CD8-positive, alpha-beta T cell (primary cell): ENCODE measurements at regions of chr7 and their contacts with region 1.

Region 1: GRCh38 chr7:73451780-73452398 is 18.3 kb downstream of the FZD9 start:
- DNase-seq: peak in 4 of 9 experiments; percentile 21 to 77 (median 44)
- ATAC-seq: peak; percentile 98
- H3K4me3 ChIP-seq: no peak overlapping the region
- H3K4me3 Mint-ChIP-seq: no peak overlapping the region
- H3K27ac ChIP-seq: no peak overlapping the region
- H3K27ac Mint-ChIP-seq: no peak overlapping the region
- H3K4me1 ChIP-seq: no peaks in the 10 kb centered on the region
- H3K4me1 Mint-ChIP-seq: peaks cover 22% of the 10 kb centered on the region
- H3K27me3 ChIP-seq: no peaks in the 10 kb centered on the region
- H3K27me3 Mint-ChIP-seq: no peaks in the 10 kb centered on the region
- CTCF ChIP-seq: peak; percentile 98

Region 2: DNA sequence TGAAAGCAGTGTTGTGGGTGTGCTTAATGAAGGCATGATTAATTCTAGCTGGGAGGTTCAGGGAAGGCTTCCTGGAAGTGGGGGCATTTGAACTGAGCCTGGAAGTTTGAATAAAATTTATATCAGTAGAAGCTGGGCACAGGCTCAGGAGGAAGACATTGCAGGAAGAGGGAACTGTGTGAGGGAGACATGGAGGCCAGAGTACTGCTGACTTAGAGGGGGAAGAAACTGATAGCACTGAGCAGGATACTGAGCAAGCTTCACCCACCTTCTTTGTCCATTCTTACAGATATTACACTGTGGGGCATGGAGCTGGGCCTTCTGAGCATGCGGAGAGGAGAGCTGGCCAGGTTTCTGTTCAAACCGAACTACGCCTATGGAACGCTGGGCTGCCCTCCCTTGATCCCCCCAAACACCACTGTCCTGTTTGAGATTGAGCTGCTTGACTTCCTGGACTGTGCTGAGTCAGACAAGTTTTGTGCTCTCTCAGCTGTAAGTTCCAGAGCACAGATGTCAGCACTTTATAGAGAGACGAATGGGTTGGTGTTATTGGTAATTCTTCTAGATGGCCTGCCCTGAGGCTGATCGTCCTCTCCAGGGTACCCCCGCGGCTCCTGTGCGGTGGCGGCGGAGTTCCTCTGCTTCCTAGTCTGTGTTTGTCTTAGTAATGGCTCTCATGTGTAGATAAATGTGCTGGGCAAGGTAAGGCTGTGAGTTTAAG is 121.9 kb before region 1 on chr7:
- CTCF ChIA-PET with region 1: interaction called, 25 read pairs
- POLR2A ChIA-PET with region 1: no interaction called
- intact Hi-C with region 1: no loop called
- DNase-seq: no peak
- ATAC-seq: no peak
- H3K4me3 ChIP-seq: no peak overlapping the region
- H3K4me3 Mint-ChIP-seq: no peak overlapping the region
- H3K27ac ChIP-seq: no peak overlapping the region
- H3K27ac Mint-ChIP-seq: no peak overlapping the region
- H3K4me1 ChIP-seq: no peaks in the 10 kb centered on the region
- H3K4me1 Mint-ChIP-seq: no peaks in the 10 kb centered on the region
- H3K27me3 ChIP-seq: no peaks in the 10 kb centered on the region
- H3K27me3 Mint-ChIP-seq: peaks cover 3% of the 10 kb centered on the region
- CTCF ChIP-seq: no peak

Region 3: DNA sequence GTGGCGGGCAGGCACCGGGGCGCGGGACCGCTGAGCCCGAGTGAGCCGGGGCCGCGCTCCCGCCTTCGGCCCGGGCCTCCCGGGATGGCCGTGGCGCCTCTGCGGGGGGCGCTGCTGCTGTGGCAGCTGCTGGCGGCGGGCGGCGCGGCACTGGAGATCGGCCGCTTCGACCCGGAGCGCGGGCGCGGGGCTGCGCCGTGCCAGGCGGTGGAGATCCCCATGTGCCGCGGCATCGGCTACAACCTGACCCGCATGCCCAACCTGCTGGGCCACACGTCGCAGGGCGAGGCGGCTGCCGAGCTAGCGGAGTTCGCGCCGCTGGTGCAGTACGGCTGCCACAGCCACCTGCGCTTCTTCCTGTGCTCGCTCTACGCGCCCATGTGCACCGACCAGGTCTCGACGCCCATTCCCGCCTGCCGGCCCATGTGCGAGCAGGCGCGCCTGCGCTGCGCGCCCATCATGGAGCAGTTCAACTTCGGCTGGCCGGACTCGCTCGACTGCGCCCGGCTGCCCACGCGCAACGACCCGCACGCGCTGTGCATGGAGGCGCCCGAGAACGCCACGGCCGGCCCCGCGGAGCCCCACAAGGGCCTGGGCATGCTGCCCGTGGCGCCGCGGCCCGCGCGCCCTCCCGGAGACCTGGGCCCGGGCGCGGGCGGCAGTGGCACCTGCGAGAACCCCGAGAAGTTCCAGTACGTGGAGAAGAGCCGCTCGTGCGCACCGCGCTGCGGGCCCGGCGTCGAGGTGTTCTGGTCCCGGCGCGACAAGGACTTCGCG is 17.8 kb before region 1 on chr7:
- CTCF ChIA-PET with region 1: interaction called, 11 read pairs
- POLR2A ChIA-PET with region 1: no interaction called
- intact Hi-C with region 1: no loop called
- DNase-seq: peak in 3 of 9 experiments; percentile 22 to 57 (median 52)
- ATAC-seq: peak; percentile 32
- H3K4me3 ChIP-seq: no peak overlapping the region
- H3K4me3 Mint-ChIP-seq: peak overlapping the region; percentile 45
- H3K27ac ChIP-seq: no peak overlapping the region
- H3K27ac Mint-ChIP-seq: no peak overlapping the region
- H3K4me1 ChIP-seq: no peaks in the 10 kb centered on the region
- H3K4me1 Mint-ChIP-seq: peaks cover 5% of the 10 kb centered on the region
- H3K27me3 ChIP-seq: peaks cover 0 to 3% of the 10 kb centered on the region in 2 experiments
- H3K27me3 Mint-ChIP-seq: peaks cover 7% of the 10 kb centered on the region
- CTCF ChIP-seq: no peak

Region 4: GRCh38 chr7:74401137-74401859 is 949.4 kb after region 1 on chr7:
- CTCF ChIA-PET with region 1: no interaction called
- POLR2A ChIA-PET with region 1: no interaction called
- intact Hi-C with region 1: no loop called
- DNase-seq: peak; percentile 46 to 84 (median 76)
- ATAC-seq: peak; percentile 73
- H3K4me3 ChIP-seq: no peak overlapping the region
- H3K4me3 Mint-ChIP-seq: no peak overlapping the region
- H3K27ac ChIP-seq: no peak overlapping the region
- H3K27ac Mint-ChIP-seq: no peak overlapping the region
- H3K4me1 ChIP-seq: no peaks in the 10 kb centered on the region
- H3K4me1 Mint-ChIP-seq: no peaks in the 10 kb centered on the region
- H3K27me3 ChIP-seq: no peaks in the 10 kb centered on the region
- H3K27me3 Mint-ChIP-seq: no peaks in the 10 kb centered on the region
- CTCF ChIP-seq: peak; percentile 88